ENCODE measurements at regions of chr2 and their contacts with region 1.

Region 1: DNA sequence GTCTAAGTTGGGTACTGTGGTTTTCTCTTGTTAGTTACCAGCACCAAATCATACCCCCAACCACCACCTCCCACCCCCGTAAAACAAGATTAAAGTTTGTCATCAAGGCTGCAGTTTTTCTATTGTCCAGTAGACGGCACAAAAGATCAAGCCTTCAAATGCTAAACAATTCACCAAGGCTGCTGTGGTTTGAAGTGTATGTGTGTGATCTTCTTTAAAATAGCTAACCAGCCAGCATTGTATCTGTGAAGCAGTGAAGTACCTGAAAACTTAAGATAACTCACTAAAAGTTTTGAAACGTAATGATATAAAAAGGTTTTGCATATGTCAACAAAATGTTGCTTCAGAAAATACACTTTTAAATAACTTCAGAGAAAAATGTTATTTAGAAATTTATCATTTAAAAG is 5.9 kb upstream of the MEIS1 start:
- DNase-seq: peak; percentile 27 to 69
- ATAC-seq: no peak
- H3K4me3 ChIP-seq: no peak overlapping the region
- H3K27ac ChIP-seq: no peak overlapping the region
- H3K4me1 ChIP-seq: peaks cover 21% of the 10 kb centered on the region; the same call in 2 of the 3 replicates
- CTCF ChIP-seq: peak; percentile 96
- EP300 ChIP-seq: no peak
- POLR2A ChIP-seq: no peak
- RAD21 ChIP-seq: peak; percentile 94 to 95

Region 2: DNA sequence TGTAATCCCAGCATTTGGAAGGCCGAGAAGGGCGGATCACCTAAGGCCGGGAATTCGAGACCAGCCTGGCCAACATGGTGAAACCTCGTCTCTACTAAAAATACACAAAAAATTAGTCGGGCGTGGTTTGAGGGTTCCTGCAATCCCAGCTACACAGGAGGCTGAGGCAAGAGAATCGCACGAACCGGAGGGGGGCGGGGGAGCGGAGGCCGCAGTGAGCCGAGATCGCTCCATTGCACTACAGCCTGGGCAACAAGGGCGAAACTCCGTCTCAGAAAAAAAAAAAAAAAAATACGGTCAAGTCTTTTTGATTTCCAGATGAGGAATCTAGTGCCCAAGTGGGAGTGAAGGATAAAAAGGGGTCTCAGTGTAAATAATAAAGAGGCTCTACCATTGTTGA is 10.7 kb before region 1 on chr2:
- CTCF ChIA-PET with region 1: interaction called, 17 read pairs
- POLR2A ChIA-PET with region 1: no interaction called
- DNase-seq: no peak
- ATAC-seq: no peak
- H3K4me3 ChIP-seq: no peak overlapping the region
- H3K27ac ChIP-seq: no peak overlapping the region
- H3K4me1 ChIP-seq: no peaks in the 10 kb centered on the region
- CTCF ChIP-seq: no peak
- EP300 ChIP-seq: no peak
- POLR2A ChIP-seq: no peak
- RAD21 ChIP-seq: no peak

Measured in A549 (cell line).